ENCODE measurements at regions of chr12 and their contacts with region 1.

Region 1: GRCh38 chr12:6195665-6196535 is 4.3 kb upstream of the CD9 start:
- DNase-seq: peak; percentile 97
- H3K4me3 ChIP-seq: no peak overlapping the region
- H3K27ac ChIP-seq: peak overlapping the region; percentile 61
- H3K4me1 ChIP-seq: peaks cover 17% of the 10 kb centered on the region
- H3K27me3 ChIP-seq: no peaks in the 10 kb centered on the region
- CTCF ChIP-seq: peak; percentile 91 to 96
- POLR2A ChIP-seq: peak; percentile 25

Region 2: GRCh38 chr12:6074979-6075585 is 120.8 kb before region 1 on chr12:
- CTCF ChIA-PET with region 1: interaction called, 16 read pairs
- POLR2A ChIA-PET with region 1: no interaction called
- dilution Hi-C with region 1: no loop called
- intact Hi-C with region 1: no loop called
- DNase-seq: peak; percentile 49
- H3K4me3 ChIP-seq: no peak overlapping the region
- H3K27ac ChIP-seq: peak overlapping the region; percentile 80
- H3K4me1 ChIP-seq: peaks cover 86% of the 10 kb centered on the region
- H3K27me3 ChIP-seq: no peaks in the 10 kb centered on the region
- CTCF ChIP-seq: peak in 1 of 2 donors; percentile 5
- POLR2A ChIP-seq: peak; percentile 67

Region 3: DNA sequence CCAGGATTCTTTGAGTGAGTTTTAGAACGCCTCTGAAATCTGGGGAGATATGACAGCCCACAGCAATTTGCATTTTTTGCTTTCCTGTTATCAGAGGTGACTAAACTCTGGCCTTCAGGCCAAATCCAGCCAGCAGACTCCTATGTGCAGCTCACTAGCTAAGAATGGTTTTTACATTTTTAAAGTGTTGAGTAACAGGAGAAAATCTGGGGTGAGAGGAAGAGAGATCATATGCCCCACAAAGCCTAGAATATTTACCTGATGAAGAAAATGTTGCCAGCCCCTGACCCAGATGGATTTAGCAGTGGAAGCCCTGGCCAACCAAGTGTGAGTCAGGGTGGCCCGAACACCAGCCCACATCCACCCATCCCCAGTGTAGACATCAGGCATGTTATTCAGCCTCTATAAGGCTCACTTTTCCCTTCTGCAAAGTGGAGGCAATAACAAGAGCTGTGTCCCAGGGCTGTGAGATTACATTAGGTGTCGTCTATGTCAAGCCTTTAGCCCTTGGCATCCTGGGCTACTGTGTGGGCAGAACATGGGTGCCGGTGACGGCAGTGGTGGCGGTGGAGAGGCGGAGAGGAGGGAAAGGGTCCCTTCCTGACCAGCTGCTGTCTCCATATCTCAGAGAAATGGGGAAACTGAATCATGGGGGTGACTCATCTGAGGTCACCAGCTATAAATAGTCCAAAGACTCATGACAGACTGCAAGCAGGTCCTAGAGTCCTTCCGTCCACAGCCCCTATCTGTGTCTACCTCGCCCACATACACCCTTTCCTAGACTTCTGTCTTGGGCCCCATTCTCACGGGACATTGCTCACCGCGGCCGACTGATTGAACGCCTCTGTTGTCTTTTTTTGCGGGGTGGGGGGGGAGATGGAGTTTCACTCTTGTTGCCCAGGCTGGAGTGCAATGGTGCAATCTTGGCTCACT is 28.3 kb before region 1 on chr12:
- CTCF ChIA-PET with region 1: interaction called, 17 read pairs
- POLR2A ChIA-PET with region 1: no interaction called
- dilution Hi-C with region 1: no loop called
- intact Hi-C with region 1: no loop called
- DNase-seq: peak; percentile 99
- H3K4me3 ChIP-seq: peak overlapping the region in 1 of 3 experiments; percentile 3
- H3K27ac ChIP-seq: peak overlapping the region; percentile 100
- H3K4me1 ChIP-seq: peaks cover 49% of the 10 kb centered on the region
- H3K27me3 ChIP-seq: no peaks in the 10 kb centered on the region
- CTCF ChIP-seq: no peak
- POLR2A ChIP-seq: peak; percentile 76

Region 4: GRCh38 chr12:6222078-6222654 is 26.3 kb after region 1 on chr12:
- CTCF ChIA-PET with region 1: interaction called, 27 read pairs
- POLR2A ChIA-PET with region 1: no interaction called
- dilution Hi-C with region 1: no loop called
- intact Hi-C with region 1: no loop called
- DNase-seq: peak; percentile 56
- H3K4me3 ChIP-seq: no peak overlapping the region
- H3K27ac ChIP-seq: peak overlapping the region; percentile 11
- H3K4me1 ChIP-seq: peaks cover 70% of the 10 kb centered on the region
- H3K27me3 ChIP-seq: no peaks in the 10 kb centered on the region
- CTCF ChIP-seq: no peak
- POLR2A ChIP-seq: peak; percentile 42

Region 5: GRCh38 chr12:6278439-6279255 is 82.7 kb after region 1 on chr12:
- CTCF ChIA-PET with region 1: interaction called, 146 read pairs
- POLR2A ChIA-PET with region 1: interaction called, 5 read pairs
- dilution Hi-C with region 1: no loop called
- intact Hi-C with region 1: loop called (anchors 1 kb)
- DNase-seq: peak; percentile 83
- H3K4me3 ChIP-seq: peak overlapping the region in 2 of 3 experiments; percentile 29 to 39
- H3K27ac ChIP-seq: peak overlapping the region; percentile 68
- H3K4me1 ChIP-seq: peaks cover 40% of the 10 kb centered on the region
- H3K27me3 ChIP-seq: no peaks in the 10 kb centered on the region
- CTCF ChIP-seq: peak; percentile 50 to 95
- POLR2A ChIP-seq: peak; percentile 57

Region 6: DNA sequence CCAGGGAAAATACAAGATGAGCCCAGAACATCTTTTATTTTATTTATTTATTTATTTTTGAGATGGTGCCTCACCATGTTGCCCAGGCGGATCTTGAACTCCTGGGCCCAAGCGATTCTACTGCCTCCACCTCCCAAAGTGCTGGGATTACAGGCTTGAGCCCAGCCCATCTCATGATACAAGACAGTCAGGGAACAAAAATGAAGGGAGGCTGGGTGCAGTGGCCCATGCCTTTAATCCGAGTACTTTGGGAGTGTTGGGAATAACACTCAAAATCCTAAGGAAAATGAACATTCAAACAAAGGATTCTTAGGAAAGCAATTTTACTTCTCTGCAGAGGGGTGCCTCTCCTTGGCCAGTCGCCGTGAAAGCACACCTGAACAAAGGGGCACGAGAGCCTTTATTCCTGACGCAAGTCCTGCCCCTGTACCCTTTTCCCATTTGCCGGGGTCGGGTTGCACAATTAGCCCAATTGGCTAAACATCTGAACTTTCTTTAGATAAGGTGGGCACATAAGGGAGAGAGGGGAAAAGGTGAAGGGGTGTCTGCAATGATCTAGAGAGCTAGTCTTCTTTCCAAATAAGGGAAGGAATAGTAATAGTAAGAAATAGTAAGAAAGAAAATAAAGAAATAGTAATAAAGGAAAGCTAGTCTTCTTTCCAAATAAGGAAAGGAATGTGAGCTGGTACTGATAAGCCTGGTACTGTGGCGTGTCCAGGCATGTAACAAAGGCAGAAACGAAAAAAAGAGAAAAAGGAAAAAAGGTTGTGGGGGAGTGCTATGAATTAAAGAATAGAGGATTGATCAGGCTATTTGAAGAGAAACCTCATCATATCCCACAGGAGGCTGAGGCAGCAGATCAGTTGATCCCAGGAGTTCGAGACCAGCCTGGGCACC is 311.4 kb after region 1 on chr12:
- CTCF ChIA-PET with region 1: no interaction called
- POLR2A ChIA-PET with region 1: no interaction called
- dilution Hi-C with region 1: no loop called
- intact Hi-C with region 1: no loop called
- DNase-seq: peak; percentile 39
- H3K4me3 ChIP-seq: no peak overlapping the region
- H3K27ac ChIP-seq: no peak overlapping the region
- H3K4me1 ChIP-seq: peaks cover 2% of the 10 kb centered on the region
- H3K27me3 ChIP-seq: no peaks in the 10 kb centered on the region
- CTCF ChIP-seq: no peak
- POLR2A ChIP-seq: no peak